Endothelial cell of umbilical vein (primary cell): ENCODE measurements at regions of chr4 and their contacts with region 1.

Region 1: GRCh38 chr4:147866532-147867271 is 134.8 kb downstream of the ARHGAP10 start:
- DNase-seq: peak; percentile 92
- H3K4me3 ChIP-seq: no peak overlapping the region
- H3K27ac ChIP-seq: no peak overlapping the region
- H3K4me1 ChIP-seq: peaks cover 9% of the 10 kb centered on the region
- H3K27me3 ChIP-seq: no peaks in the 10 kb centered on the region
- CTCF ChIP-seq: peak; percentile 92 to 99
- POLR2A ChIP-seq: no peak

Region 2: DNA sequence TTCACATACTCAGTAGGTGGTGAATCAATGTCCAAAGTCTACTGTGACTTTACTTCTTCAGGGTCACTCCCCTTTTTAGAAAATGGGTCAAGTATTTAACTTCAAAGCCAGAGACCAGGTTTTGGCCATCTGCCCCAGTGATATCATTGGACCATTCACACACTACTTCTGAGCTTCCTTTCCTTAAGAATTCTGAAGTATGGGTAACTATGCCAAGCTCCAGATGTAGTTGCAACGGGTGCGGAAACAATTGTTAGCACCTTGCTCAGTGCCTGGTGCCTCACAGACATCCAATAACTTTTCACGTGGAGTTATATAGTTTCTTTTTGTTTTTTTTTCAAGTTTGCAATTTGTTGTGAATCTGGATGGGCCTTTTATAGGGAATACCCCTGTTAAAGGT is 983.6 kb before region 1 on chr4:
- CTCF ChIA-PET with region 1: no interaction called
- POLR2A ChIA-PET with region 1: no interaction called
- dilution Hi-C with region 1: no loop called
- intact Hi-C with region 1: no loop called
- DNase-seq: no peak
- H3K4me3 ChIP-seq: no peak overlapping the region
- H3K27ac ChIP-seq: no peak overlapping the region
- H3K4me1 ChIP-seq: no peaks in the 10 kb centered on the region
- H3K27me3 ChIP-seq: peaks cover 2 to 4% of the 10 kb centered on the region in 2 experiments
- CTCF ChIP-seq: no peak
- POLR2A ChIP-seq: no peak

Region 3: GRCh38 chr4:146998157-146998556 is 868.5 kb before region 1 on chr4:
- CTCF ChIA-PET with region 1: no interaction called
- POLR2A ChIA-PET with region 1: no interaction called
- dilution Hi-C with region 1: no loop called
- intact Hi-C with region 1: no loop called
- DNase-seq: no peak
- H3K4me3 ChIP-seq: no peak overlapping the region
- H3K27ac ChIP-seq: no peak overlapping the region
- H3K4me1 ChIP-seq: no peaks in the 10 kb centered on the region
- H3K27me3 ChIP-seq: no peaks in the 10 kb centered on the region
- CTCF ChIP-seq: no peak
- POLR2A ChIP-seq: no peak

Region 4: GRCh38 chr4:147096667-147097604 is 769.8 kb before region 1 on chr4:
- CTCF ChIA-PET with region 1: interaction called, 16 read pairs
- POLR2A ChIA-PET with region 1: no interaction called
- dilution Hi-C with region 1: no loop called
- intact Hi-C with region 1: no loop called
- DNase-seq: peak; percentile 63
- H3K4me3 ChIP-seq: no peak overlapping the region
- H3K27ac ChIP-seq: no peak overlapping the region
- H3K4me1 ChIP-seq: no peaks in the 10 kb centered on the region
- H3K27me3 ChIP-seq: peaks cover 9 to 19% of the 10 kb centered on the region in 2 experiments
- CTCF ChIP-seq: peak; percentile 26 to 32
- POLR2A ChIP-seq: no peak

Region 5: DNA sequence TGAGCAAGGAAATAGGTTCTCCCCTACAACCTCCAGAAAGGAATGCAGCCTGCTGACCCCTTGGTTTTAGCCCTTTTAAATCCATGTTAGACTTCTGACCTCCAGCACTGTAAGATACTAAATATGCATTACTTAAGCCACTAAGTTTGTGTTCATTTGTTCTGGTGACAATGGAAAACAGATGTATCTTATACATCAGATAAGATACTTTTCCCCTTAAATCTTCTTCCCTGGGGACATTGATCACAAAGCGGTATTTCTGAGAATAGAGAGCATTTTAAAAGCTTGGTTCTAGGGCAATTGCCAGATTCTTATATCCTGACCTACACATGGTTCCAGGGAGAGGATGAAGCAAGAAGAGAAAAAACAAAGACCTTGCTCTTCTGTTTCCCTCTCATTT is 256.0 kb before region 1 on chr4:
- CTCF ChIA-PET with region 1: interaction called, 73 read pairs
- POLR2A ChIA-PET with region 1: no interaction called
- dilution Hi-C with region 1: no loop called
- intact Hi-C with region 1: no loop called
- DNase-seq: no peak
- H3K4me3 ChIP-seq: no peak overlapping the region
- H3K27ac ChIP-seq: no peak overlapping the region
- H3K4me1 ChIP-seq: no peaks in the 10 kb centered on the region
- H3K27me3 ChIP-seq: peaks cover 17 to 22% of the 10 kb centered on the region in 2 experiments
- CTCF ChIP-seq: no peak
- POLR2A ChIP-seq: no peak

Region 6: DNA sequence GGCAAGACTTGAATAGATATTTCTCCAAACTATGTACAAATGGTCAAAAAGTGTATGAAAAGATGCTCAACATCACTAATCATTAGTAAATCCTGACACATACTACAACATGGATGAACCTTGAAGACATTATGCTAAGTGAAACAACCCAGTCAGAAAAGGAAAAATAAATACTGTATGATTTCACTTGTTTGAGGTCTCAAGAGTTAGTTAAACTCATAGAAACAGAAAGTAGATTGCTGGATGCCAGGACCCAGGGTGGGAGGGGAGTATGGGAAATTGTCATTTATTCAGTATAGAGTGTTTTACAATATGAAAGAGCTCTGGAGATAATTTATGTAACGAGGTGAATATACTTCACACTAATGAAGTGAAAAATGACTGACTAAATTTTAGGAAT is 215.1 kb before region 1 on chr4:
- CTCF ChIA-PET with region 1: interaction called, 15 read pairs
- POLR2A ChIA-PET with region 1: no interaction called
- dilution Hi-C with region 1: no loop called
- intact Hi-C with region 1: no loop called
- DNase-seq: no peak
- H3K4me3 ChIP-seq: no peak overlapping the region
- H3K27ac ChIP-seq: no peak overlapping the region
- H3K4me1 ChIP-seq: no peaks in the 10 kb centered on the region
- H3K27me3 ChIP-seq: no peaks in the 10 kb centered on the region
- CTCF ChIP-seq: no peak
- POLR2A ChIP-seq: no peak

Region 7: DNA sequence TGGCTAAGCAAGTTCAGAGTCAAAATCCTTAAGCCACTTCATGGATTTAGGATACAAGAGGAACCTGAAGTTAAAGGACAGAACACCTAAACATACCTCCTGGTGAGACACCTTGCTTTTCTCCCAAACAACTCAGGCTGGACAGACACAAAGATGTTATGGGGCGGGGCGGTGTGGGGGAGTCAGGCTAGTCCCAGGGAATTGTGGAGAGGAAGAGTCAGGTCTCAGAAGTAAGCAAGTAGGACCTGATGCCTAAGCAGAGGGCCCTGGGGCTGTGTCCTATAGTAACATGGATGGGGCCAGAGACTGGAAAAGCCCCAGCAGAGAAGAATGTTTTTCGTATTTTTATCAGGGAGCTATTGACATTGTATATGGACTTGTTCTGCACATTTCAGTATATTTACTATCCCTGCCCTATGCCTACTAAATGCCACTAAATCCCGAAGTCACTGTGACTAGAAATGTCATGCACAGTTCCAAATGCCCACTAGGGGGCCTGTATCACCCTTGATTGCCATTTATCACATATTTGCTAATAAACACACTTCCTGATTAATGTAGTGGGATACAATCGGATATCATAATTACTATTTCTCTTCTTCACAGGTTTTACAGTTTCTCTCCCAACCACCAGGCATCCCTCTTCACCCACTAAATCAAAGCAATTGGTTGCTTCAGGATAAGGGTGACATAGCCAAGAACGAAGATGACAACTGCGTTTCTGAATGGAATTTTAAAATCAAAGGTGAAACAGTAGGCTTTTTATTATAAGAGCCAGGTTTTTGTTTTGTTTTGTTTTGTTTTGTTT is 158.6 kb before region 1 on chr4:
- CTCF ChIA-PET with region 1: interaction called, 308 read pairs
- POLR2A ChIA-PET with region 1: no interaction called
- dilution Hi-C with region 1: no loop called
- intact Hi-C with region 1: loop called (anchors 1 kb)
- DNase-seq: peak; percentile 66
- H3K4me3 ChIP-seq: no peak overlapping the region
- H3K27ac ChIP-seq: no peak overlapping the region
- H3K4me1 ChIP-seq: no peaks in the 10 kb centered on the region
- H3K27me3 ChIP-seq: no peaks in the 10 kb centered on the region
- CTCF ChIP-seq: peak; percentile 70 to 78
- POLR2A ChIP-seq: no peak

Region 8: DNA sequence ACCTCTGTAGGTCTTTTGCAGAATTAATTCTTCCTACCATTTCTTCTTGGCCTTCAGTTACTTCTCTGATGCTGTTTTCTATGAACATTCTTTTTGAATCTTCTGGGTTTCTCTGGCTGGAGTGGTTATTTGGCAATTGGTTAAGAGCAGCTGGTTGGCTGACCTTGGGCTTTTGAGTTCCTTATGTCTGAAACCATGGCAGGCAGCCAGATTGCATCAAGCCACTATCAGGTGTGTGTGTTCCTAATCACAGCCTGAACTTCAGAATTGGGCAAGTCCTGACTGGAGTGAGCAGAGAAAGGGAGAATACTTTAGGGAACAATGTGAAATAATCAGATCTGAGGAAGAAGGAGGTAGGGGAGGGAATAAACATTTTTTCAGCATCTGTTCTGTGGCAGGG is 44.6 kb before region 1 on chr4:
- CTCF ChIA-PET with region 1: interaction called, 30 read pairs
- POLR2A ChIA-PET with region 1: no interaction called
- dilution Hi-C with region 1: no loop called
- intact Hi-C with region 1: no loop called
- DNase-seq: peak; percentile 37
- H3K4me3 ChIP-seq: no peak overlapping the region
- H3K27ac ChIP-seq: no peak overlapping the region
- H3K4me1 ChIP-seq: peaks cover 18% of the 10 kb centered on the region
- H3K27me3 ChIP-seq: no peaks in the 10 kb centered on the region
- CTCF ChIP-seq: no peak
- POLR2A ChIP-seq: no peak

Region 9: GRCh38 chr4:149264093-149264733 is 1397.5 kb after region 1 on chr4:
- CTCF ChIA-PET with region 1: interaction called, 15 read pairs
- POLR2A ChIA-PET with region 1: no interaction called
- dilution Hi-C with region 1: no loop called
- intact Hi-C with region 1: no loop called
- DNase-seq: peak; percentile 55
- H3K4me3 ChIP-seq: no peak overlapping the region
- H3K27ac ChIP-seq: no peak overlapping the region
- H3K4me1 ChIP-seq: peaks cover 3% of the 10 kb centered on the region
- H3K27me3 ChIP-seq: no peaks in the 10 kb centered on the region
- CTCF ChIP-seq: peak; percentile 48 to 55
- POLR2A ChIP-seq: no peak